ENCODE measurements at regions of chr19 and their contacts with region 1.

Region 1: GRCh38 chr19:48290771-48291488 is 21.0 kb downstream of the ZNF114 start:
- DNase-seq: peak; percentile 88
- ATAC-seq: peak; percentile 95

Region 2: GRCh38 chr19:48271531-48272151 is 19.3 kb before region 1 on chr19:
- intact Hi-C with region 1: loop called (anchors 2 kb)
- DNase-seq: peak; percentile 60
- ATAC-seq: peak; percentile 75